ENCODE measurements at regions of chr2 and their contacts with region 1.

Region 1: GRCh38 chr2:25700221-25700660 is 26.9 kb upstream of the DTNB start:
- DNase-seq: peak; percentile 55 to 70
- ATAC-seq: peak; percentile 75 to 82
- H3K4me3 ChIP-seq: no peak overlapping the region
- H3K27ac ChIP-seq: no peak overlapping the region
- H3K4me1 ChIP-seq: peaks cover 13% of the 10 kb centered on the region; the same call in 1 of the 3 replicates
- CTCF ChIP-seq: peak; percentile 68
- EP300 ChIP-seq: no peak
- POLR2A ChIP-seq: no peak
- RAD21 ChIP-seq: peak; percentile 63 to 77

Region 2: GRCh38 chr2:25528173-25528572 is 172.1 kb before region 1 on chr2:
- CTCF ChIA-PET with region 1: no interaction called
- POLR2A ChIA-PET with region 1: no interaction called
- DNase-seq: no peak
- ATAC-seq: no peak
- H3K4me3 ChIP-seq: no peak overlapping the region
- H3K27ac ChIP-seq: no peak overlapping the region
- H3K4me1 ChIP-seq: no peaks in the 10 kb centered on the region
- CTCF ChIP-seq: no peak
- EP300 ChIP-seq: no peak
- POLR2A ChIP-seq: no peak
- RAD21 ChIP-seq: no peak

Region 3: DNA sequence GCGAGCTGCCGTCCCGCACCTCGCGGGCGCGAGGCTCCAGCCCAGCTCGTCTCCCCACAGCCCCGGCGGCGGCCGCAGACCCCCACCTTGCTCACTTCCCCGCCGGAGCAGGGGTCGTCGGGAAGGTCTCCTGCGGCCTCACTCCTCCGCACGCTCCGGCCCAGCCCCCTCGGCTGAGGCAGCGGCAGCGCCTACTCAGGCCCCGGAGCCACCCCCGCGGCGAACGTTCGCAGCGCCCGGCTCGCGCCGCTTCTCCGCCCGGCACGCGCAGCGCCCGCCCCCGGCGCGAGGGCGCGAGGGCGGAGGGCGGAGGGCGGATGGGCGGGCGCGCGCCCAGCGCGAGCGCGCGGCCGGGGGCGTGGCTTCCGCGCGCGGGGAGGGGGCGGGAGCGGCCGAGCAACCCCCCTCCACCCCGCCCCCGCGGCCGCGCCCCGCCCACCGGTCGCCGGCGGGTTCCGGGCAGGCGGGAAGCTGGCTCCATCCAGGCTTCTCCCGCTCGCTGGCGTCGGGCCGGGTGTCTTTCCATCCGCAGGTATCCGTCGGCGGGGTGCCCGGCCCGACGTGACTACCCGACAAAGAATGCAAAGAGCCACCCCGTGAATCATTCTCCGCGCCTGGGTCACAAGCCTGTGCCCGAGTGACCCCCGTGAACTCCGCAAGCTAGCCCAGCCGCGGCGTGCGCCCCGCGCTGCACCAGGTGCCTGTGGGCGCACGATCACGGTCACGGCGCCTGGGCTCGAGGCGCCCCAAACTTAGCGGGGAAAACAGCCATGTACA is 26.8 kb before region 1 on chr2 and contains the start of gene DTNB:
- CTCF ChIA-PET with region 1: interaction called, 25 read pairs
- POLR2A ChIA-PET with region 1: interaction called, 5 read pairs
- DNase-seq: peak; percentile 77 to 78
- ATAC-seq: peak; percentile 80 to 82
- H3K4me3 ChIP-seq: peak within 1 kb of the TSS; percentile 79
- H3K27ac ChIP-seq: peak within 1 kb of the TSS; percentile 85 to 93
- H3K4me1 ChIP-seq: peaks cover 13% of the 10 kb centered on the region
- CTCF ChIP-seq: no peak
- EP300 ChIP-seq: no peak
- POLR2A ChIP-seq: peak; percentile 53
- RAD21 ChIP-seq: no peak
- polyA plus RNA-seq, gene DTNB: 32.6 and 41.2 TPM in 2 replicates

Region 4: GRCh38 chr2:25690058-25690457 is 10.2 kb before region 1 on chr2:
- CTCF ChIA-PET with region 1: interaction called, 80 read pairs
- POLR2A ChIA-PET with region 1: no interaction called
- DNase-seq: peak in 1 of 2 experiments; percentile 33
- ATAC-seq: peak; percentile 33 to 39; a peak in 3 of 6 replicates
- H3K4me3 ChIP-seq: no peak overlapping the region
- H3K27ac ChIP-seq: no peak overlapping the region
- H3K4me1 ChIP-seq: 0 out of 3 replicates have a peak, but pooled peaks cover 4% of the 10 kb centered on the region
- CTCF ChIP-seq: no peak
- EP300 ChIP-seq: no peak
- POLR2A ChIP-seq: no peak
- RAD21 ChIP-seq: no peak

Region 5: DNA sequence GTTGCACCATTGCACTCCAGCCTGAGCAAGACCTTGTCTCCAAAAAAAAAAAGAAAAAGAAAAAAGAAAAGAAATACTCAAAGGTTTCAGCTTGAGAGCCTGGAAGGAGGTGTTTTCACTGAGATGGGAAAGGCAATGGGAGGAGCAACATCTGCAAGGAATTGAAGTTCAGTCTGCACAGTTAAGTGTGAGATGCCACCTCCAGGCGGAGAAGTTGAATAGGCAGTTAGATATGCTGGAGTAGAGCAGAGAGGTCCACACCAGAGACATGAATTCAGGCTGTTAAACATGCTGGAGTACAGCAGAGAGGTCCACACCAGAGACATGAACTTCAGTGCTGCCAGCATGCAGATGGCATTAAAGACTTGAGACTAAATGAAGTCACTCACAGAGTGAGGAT is 14.5 kb after region 1 on chr2:
- CTCF ChIA-PET with region 1: interaction called, 46 read pairs
- POLR2A ChIA-PET with region 1: interaction called, 3 read pairs
- DNase-seq: peak; percentile 31 to 66
- ATAC-seq: peak; percentile 86 to 88
- H3K4me3 ChIP-seq: no peak overlapping the region
- H3K27ac ChIP-seq: no peak overlapping the region
- H3K4me1 ChIP-seq: peaks cover 6% of the 10 kb centered on the region; the same call in 2 of the 3 replicates
- CTCF ChIP-seq: peak; percentile 21; the same call in 1 of the 3 replicates
- EP300 ChIP-seq: no peak
- POLR2A ChIP-seq: no peak
- RAD21 ChIP-seq: peak; percentile 25 to 58; a peak in 2 of 5 replicates

Region 6: DNA sequence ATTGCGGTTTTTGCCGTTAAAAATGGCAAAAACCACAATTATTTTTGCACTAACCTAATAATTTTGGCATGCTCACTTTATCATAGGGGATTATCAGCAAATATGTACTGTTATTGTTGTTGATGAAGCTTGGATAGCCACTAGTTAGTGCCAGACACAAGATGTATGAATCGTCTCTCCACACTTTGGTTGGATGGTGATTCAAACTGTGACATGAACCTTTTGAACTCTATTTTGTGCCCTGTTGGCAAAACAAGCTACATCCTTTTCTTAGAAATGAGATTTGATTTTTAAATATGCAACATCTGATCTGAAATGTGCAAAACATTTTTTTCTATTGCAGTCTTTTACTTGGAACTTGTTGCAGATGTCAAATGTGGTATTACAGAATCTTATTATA is 22.0 kb after region 1 on chr2:
- CTCF ChIA-PET with region 1: interaction called, 39 read pairs
- POLR2A ChIA-PET with region 1: no interaction called
- DNase-seq: no peak
- ATAC-seq: no peak
- H3K4me3 ChIP-seq: no peak overlapping the region
- H3K27ac ChIP-seq: no peak overlapping the region
- H3K4me1 ChIP-seq: no peaks in the 10 kb centered on the region
- CTCF ChIP-seq: no peak
- EP300 ChIP-seq: no peak
- POLR2A ChIP-seq: no peak
- RAD21 ChIP-seq: no peak

Measured in A549 (cell line).